Dendritic cell treated with granulocyte-macrophage colony-stimulating factor and Interleukin-4, amounts not matched to agents 40 ng/mL and 50 ng/mL, for 4 days (primary cell): ENCODE measurements at regions of chr1 and their contacts with region 1.

Region 1: GRCh38 chr1:15847100-15847892 is at the start of gene SPEN:
- H3K4me3 Mint-ChIP-seq: peak within 1 kb of the TSS; percentile 100
- H3K27ac Mint-ChIP-seq: peak within 1 kb of the TSS; percentile 97
- H3K4me1 Mint-ChIP-seq: peaks cover 44% of the 10 kb centered on the region
- H3K27me3 Mint-ChIP-seq: no peaks in the 10 kb centered on the region

Region 2: GRCh38 chr1:15816674-15817073 is 30.6 kb before region 1 on chr1:
- intact Hi-C with region 1: loop called (anchors 5 kb)
- H3K4me3 Mint-ChIP-seq: no peak overlapping the region
- H3K27ac Mint-ChIP-seq: peak overlapping the region; percentile 18
- H3K4me1 Mint-ChIP-seq: peaks cover 8% of the 10 kb centered on the region
- H3K27me3 Mint-ChIP-seq: no peaks in the 10 kb centered on the region

Region 3: GRCh38 chr1:15835741-15836510 is 11.4 kb before region 1 on chr1:
- intact Hi-C with region 1: loop called (anchors 1 kb)
- H3K4me3 Mint-ChIP-seq: peak overlapping the region; percentile 85
- H3K27ac Mint-ChIP-seq: peak overlapping the region; percentile 98
- H3K4me1 Mint-ChIP-seq: peaks cover 30% of the 10 kb centered on the region
- H3K27me3 Mint-ChIP-seq: no peaks in the 10 kb centered on the region

Region 4: DNA sequence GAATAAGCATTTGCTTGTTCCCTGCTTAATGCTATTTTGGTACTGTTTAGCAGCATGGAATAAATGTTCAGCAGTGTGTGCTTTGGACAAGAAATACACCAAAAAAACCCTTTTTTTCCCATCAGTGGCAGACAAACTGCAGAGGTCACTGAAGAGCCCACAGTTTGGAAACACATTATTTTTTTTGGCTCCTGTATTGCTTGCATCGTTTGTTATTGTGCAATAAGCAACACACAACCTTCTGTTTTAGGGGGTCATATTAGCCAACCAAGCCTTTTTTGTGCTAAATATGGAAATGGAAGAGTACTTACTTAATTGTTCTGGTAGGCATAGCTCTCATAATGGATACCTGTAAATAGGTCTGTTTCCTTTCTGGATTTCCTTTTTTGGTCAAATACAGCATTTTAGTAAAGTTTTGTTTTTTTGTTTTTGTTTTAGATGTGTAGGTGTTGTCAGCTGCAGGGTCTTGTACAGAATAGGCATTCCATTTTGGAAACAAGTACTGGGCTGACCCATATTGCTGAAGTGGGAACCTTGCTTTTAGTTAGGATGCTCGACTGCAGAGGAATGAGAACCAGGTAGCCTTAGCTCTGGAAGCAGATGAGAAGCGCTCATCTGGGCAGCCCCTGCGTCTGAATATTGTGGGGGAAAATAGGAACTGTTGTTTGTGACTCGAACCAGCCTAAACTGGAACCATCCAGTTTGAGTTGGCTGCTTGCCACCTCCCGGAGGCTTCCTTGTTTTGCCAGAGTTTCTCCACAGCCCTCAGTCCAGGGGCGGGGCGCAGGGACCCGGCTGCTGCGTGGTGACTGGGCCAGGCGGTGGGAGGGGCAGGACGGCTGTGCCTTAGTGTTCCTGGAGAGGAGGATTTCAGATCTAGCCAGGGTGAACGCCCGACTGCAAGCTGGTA is 38.7 kb after region 1 on chr1:
- intact Hi-C with region 1: loop called (anchors 5 kb)
- H3K4me3 Mint-ChIP-seq: peak overlapping the region; percentile 74
- H3K27ac Mint-ChIP-seq: peak overlapping the region; percentile 93
- H3K4me1 Mint-ChIP-seq: peaks cover 63% of the 10 kb centered on the region
- H3K27me3 Mint-ChIP-seq: no peaks in the 10 kb centered on the region